T-cell (primary cell): ENCODE measurements at regions of chr3 and their contacts with region 1.

Region 1: GRCh38 chr3:42443819-42444436 is 33.5 kb upstream of the LYZL4 start:
- DNase-seq: peak; percentile 32 to 85 (median 69)
- ATAC-seq: peak; percentile 82 to 88 (median 86)
- H3K4me3 ChIP-seq: no peak overlapping the region
- H3K4me3 Mint-ChIP-seq: no peak overlapping the region
- H3K27ac ChIP-seq: no peak overlapping the region
- H3K27ac Mint-ChIP-seq: no peak overlapping the region
- H3K4me1 ChIP-seq: no peaks in the 10 kb centered on the region
- H3K4me1 Mint-ChIP-seq: peaks cover 0 to 8% (median 3%) of the 10 kb centered on the region in 3 donors
- H3K27me3 ChIP-seq: peaks cover 0 to 14% of the 10 kb centered on the region in 2 experiments
- H3K27me3 Mint-ChIP-seq: peaks cover 4 to 21% of the 10 kb centered on the region in 2 donors

Region 2: DNA sequence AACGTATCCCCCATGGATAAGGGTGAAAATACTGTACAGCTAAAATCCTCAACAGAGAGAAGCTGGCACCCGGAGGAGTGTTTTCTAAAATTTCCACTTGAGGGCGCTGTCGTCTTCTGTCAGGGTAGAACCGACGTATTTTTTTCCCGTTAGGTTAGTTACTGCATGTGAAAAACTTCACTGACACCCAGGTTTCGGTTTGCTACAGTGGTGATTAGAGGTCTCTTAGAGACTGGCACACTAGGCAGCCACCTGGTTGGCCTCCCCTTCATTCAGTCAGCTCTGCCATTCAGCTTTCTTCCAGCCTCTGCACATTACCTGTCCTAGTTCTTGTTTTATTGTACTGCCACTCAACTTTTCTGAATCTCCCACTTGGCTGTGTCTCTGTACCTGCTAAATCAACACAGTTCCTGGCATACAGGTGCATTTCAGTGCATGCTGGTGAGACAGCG is 196.3 kb before region 1 on chr3:
- CTCF ChIA-PET with region 1: interaction called, 9 to 18 read pairs
- POLR2A ChIA-PET with region 1: no interaction called
- DNase-seq: peak; percentile 15 to 79 (median 55)
- ATAC-seq: peak; percentile 73 to 92 (median 85)
- H3K4me3 ChIP-seq: no peak overlapping the region
- H3K4me3 Mint-ChIP-seq: peak overlapping the region in 1 of 3 donors; percentile 27
- H3K27ac ChIP-seq: no peak overlapping the region
- H3K27ac Mint-ChIP-seq: peak overlapping the region; percentile 17 to 59
- H3K4me1 ChIP-seq: peaks cover 0 to 4% of the 10 kb centered on the region in 2 experiments
- H3K4me1 Mint-ChIP-seq: peaks cover 9 to 12% (median 11%) of the 10 kb centered on the region in 3 donors
- H3K27me3 ChIP-seq: peaks cover 0 to 4% of the 10 kb centered on the region in 2 experiments
- H3K27me3 Mint-ChIP-seq: peaks cover 10 to 11% of the 10 kb centered on the region in 2 donors

Region 3: GRCh38 chr3:42345811-42346210 is 98.1 kb before region 1 on chr3:
- CTCF ChIA-PET with region 1: no interaction called
- POLR2A ChIA-PET with region 1: no interaction called
- DNase-seq: peak in 30 of 35 experiments; percentile 2 to 66 (median 18)
- ATAC-seq: peak; percentile 76 to 88 (median 78)
- H3K4me3 ChIP-seq: no peak overlapping the region
- H3K4me3 Mint-ChIP-seq: peak overlapping the region; percentile 15 to 56 (median 52)
- H3K27ac ChIP-seq: peak overlapping the region; percentile 59
- H3K27ac Mint-ChIP-seq: peak overlapping the region; percentile 91 to 97
- H3K4me1 ChIP-seq: peaks cover 14 to 17% of the 10 kb centered on the region in 2 experiments
- H3K4me1 Mint-ChIP-seq: peaks cover 42 to 48% (median 46%) of the 10 kb centered on the region in 3 donors
- H3K27me3 ChIP-seq: peaks cover 0 to 3% of the 10 kb centered on the region in 2 experiments
- H3K27me3 Mint-ChIP-seq: peaks cover 7 to 9% of the 10 kb centered on the region in 2 donors

Region 4: GRCh38 chr3:42425736-42426407 is 18.1 kb before region 1 on chr3:
- CTCF ChIA-PET with region 1: no interaction called
- POLR2A ChIA-PET with region 1: no interaction called
- DNase-seq: no peak
- ATAC-seq: no peak
- H3K4me3 ChIP-seq: no peak overlapping the region
- H3K4me3 Mint-ChIP-seq: no peak overlapping the region
- H3K27ac ChIP-seq: no peak overlapping the region
- H3K27ac Mint-ChIP-seq: no peak overlapping the region
- H3K4me1 ChIP-seq: no peaks in the 10 kb centered on the region
- H3K4me1 Mint-ChIP-seq: no peaks in the 10 kb centered on the region
- H3K27me3 ChIP-seq: peaks cover 0 to 2% of the 10 kb centered on the region in 2 experiments
- H3K27me3 Mint-ChIP-seq: peaks cover 13 to 23% of the 10 kb centered on the region in 2 donors

Region 5: DNA sequence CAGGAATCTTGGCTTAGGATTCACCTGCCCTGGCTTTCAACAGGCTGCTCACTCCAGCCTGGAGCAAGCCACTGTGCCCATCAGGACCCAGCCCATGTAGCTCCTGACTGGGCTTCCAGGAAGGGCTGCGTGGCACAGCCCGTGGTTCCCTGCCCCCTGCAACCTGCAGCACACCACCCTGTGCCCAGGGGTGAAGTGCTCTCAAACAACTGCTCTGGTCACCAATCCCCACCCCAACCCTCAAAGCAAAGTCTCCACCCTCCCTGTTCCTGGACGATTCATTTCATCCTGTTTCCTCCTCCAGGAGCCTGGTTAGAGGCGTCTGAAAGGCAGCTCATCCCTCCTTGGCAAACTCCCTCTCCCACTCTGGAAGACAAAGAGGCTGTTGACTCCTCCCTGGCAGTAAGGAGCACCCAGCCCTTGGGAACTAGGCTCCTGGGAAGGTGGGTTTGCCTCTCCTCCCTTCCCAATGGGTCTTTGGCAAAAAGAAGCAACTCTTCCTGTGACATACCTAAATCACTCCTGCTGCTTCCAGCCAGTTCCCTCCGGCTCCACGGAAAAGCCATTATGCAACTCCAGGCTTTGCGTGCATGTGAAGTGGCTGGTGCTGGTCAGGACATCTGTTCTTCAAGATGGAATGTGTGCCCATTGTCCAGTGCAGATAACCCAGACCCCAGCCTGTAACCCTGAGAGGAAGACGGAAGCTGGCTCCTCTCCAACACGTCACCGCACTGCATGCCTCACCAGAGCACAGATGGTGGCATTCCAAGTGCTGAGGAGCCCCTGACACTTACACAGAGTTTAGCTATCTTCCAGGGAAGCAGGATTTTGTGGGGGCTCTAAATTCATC is 29.4 kb after region 1 on chr3:
- CTCF ChIA-PET with region 1: no interaction called
- POLR2A ChIA-PET with region 1: no interaction called
- DNase-seq: no peak
- ATAC-seq: no peak
- H3K4me3 ChIP-seq: no peak overlapping the region
- H3K4me3 Mint-ChIP-seq: no peak overlapping the region
- H3K27ac ChIP-seq: no peak overlapping the region
- H3K27ac Mint-ChIP-seq: no peak overlapping the region
- H3K4me1 ChIP-seq: no peaks in the 10 kb centered on the region
- H3K4me1 Mint-ChIP-seq: no peaks in the 10 kb centered on the region
- H3K27me3 ChIP-seq: peaks cover 0 to 31% of the 10 kb centered on the region in 2 experiments
- H3K27me3 Mint-ChIP-seq: peaks cover 10 to 24% of the 10 kb centered on the region in 2 donors

Region 6: DNA sequence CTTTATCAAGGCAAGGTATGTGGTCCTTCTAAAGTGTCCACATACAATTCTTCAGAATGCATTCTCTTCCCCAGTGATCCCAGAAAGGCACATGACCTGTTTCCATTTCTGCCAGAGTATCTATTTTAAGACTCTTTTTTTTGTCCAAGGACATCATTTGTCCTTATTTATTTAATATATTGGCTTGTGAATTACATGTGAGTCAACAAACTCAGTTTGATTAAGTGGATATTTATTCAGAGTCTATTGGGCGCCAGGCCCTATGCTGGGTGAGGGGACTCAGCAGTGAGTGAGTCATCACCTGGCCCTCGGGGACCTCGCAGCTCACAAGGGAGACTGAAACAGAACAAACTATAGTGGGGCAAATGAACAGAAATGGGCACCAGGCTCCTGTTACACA is 979.2 kb after region 1 on chr3:
- CTCF ChIA-PET with region 1: no interaction called
- POLR2A ChIA-PET with region 1: no interaction called
- DNase-seq: no peak
- ATAC-seq: no peak
- H3K4me3 ChIP-seq: no peak overlapping the region
- H3K4me3 Mint-ChIP-seq: no peak overlapping the region
- H3K27ac ChIP-seq: no peak overlapping the region
- H3K27ac Mint-ChIP-seq: no peak overlapping the region
- H3K4me1 ChIP-seq: no peaks in the 10 kb centered on the region
- H3K4me1 Mint-ChIP-seq: no peaks in the 10 kb centered on the region
- H3K27me3 ChIP-seq: no peaks in the 10 kb centered on the region
- H3K27me3 Mint-ChIP-seq: no peaks in the 10 kb centered on the region